ENCODE measurements at regions of chr19 and their contacts with region 1.

Region 1: DNA sequence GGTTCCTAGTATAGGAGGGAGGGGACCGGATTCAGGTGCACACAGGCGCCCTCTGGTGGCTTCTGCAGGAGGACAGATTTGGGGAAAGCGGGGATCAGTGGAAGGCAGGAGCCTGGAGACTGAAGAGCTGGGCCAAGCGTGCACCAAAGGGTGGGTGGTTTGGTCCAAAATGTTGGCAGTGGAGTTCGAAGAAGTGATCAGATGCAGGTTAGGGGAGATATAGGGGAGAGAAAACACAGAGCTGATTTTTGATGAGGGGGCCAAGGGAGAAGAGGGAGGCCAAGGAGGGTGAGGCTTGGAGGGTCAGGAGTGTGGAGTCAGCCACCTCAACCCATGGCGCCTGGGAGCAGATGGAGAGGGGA is 6.8 kb upstream of the CARM1 start:
- DNase-seq: peak; percentile 57 to 87 (median 82)
- ATAC-seq: peak; percentile 95
- H3K4me3 ChIP-seq: no peak overlapping the region
- H3K4me3 Mint-ChIP-seq: no peak overlapping the region
- H3K27ac ChIP-seq: no peak overlapping the region
- H3K27ac Mint-ChIP-seq: no peak overlapping the region
- H3K4me1 ChIP-seq: peaks cover 10% of the 10 kb centered on the region
- H3K4me1 Mint-ChIP-seq: peaks cover 6% of the 10 kb centered on the region
- H3K27me3 ChIP-seq: no peaks in the 10 kb centered on the region
- H3K27me3 Mint-ChIP-seq: no peaks in the 10 kb centered on the region
- CTCF ChIP-seq: peak; percentile 74

Region 2: DNA sequence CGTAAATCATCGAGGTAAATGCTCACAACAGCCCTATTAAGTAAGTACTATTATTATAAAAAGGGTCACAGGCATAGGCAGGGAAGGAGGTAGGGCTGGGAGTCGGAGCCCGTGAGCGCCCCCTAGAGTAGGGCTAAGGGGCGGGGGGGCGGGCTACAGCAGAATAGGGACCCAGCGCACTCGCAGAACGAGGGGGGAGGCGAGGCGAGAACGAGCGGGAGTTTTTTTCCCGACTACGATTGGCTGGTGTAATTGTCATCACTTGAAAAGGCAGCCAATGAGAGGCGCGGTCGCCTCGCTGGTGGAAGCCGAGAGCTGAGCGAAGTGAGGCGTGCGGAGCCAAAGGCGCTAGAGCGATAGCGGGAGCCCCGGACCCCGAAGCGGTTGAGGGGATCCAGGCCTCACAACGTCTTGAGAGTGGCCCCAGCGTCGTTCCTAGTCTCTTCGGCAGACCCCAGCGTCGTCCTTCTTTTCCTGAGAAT is 385.6 kb before region 1 on chr19:
- CTCF ChIA-PET with region 1: no interaction called
- POLR2A ChIA-PET with region 1: no interaction called
- intact Hi-C with region 1: loop called in 1 of 2 experiments (anchors 5 kb)
- DNase-seq: peak; percentile 75 to 96 (median 88)
- ATAC-seq: peak; percentile 97
- H3K4me3 ChIP-seq: peak overlapping the region; percentile 27 to 28
- H3K4me3 Mint-ChIP-seq: peak overlapping the region; percentile 70
- H3K27ac ChIP-seq: no peak overlapping the region
- H3K27ac Mint-ChIP-seq: no peak overlapping the region
- H3K4me1 ChIP-seq: peaks cover 10% of the 10 kb centered on the region
- H3K4me1 Mint-ChIP-seq: peaks cover 14% of the 10 kb centered on the region
- H3K27me3 ChIP-seq: no peaks in the 10 kb centered on the region
- H3K27me3 Mint-ChIP-seq: no peaks in the 10 kb centered on the region
- CTCF ChIP-seq: peak; percentile 74

Region 3: GRCh38 chr19:10701955-10702525 is 162.5 kb before region 1 on chr19:
- CTCF ChIA-PET with region 1: interaction called, 21 read pairs
- POLR2A ChIA-PET with region 1: interaction called, 8 read pairs
- intact Hi-C with region 1: no loop called
- DNase-seq: peak in 3 of 9 experiments; percentile 16 to 54 (median 52)
- ATAC-seq: peak; percentile 20
- H3K4me3 ChIP-seq: peak overlapping the region; percentile 80 to 81
- H3K4me3 Mint-ChIP-seq: peak overlapping the region; percentile 88
- H3K27ac ChIP-seq: peak overlapping the region in 1 of 2 experiments; percentile 48
- H3K27ac Mint-ChIP-seq: no peak overlapping the region
- H3K4me1 ChIP-seq: peaks cover 11% of the 10 kb centered on the region
- H3K4me1 Mint-ChIP-seq: peaks cover 11% of the 10 kb centered on the region
- H3K27me3 ChIP-seq: no peaks in the 10 kb centered on the region
- H3K27me3 Mint-ChIP-seq: peaks cover 5% of the 10 kb centered on the region
- CTCF ChIP-seq: no peak

Region 4: DNA sequence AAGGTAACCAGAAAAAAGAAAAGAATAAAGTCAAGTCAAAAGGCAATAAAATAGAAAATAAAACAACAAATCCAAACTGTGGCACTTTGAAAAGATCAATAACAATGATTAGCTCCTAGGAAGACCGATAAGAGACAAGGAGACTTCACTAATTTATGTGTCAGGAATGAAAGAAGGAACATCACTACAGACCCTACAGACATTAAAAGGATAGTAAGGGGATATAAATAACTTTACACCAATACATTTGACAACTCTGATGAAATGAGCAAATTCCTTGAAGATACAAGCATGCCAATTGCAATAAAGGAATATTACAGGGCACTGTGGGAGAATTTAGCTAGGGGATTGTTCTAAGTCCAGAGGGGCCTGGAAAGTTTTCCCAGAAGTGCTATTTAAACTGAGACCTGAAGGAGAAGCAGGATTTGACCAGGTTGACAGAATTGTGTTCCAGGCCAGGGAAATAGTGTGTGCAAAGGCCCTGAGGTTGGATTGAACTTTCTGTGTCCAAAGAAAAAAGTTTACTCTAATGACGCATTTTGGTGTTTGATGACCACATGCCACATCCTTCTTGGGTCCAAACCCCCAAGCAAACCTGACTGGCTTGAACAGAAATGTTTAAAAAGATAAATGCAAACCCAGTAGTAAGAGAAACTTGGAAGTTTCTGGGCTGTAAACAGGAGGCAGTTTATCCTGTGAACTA is 17.9 kb before region 1 on chr19:
- CTCF ChIA-PET with region 1: interaction called, 12 read pairs
- POLR2A ChIA-PET with region 1: no interaction called
- intact Hi-C with region 1: no loop called
- DNase-seq: no peak
- ATAC-seq: no peak
- H3K4me3 ChIP-seq: no peak overlapping the region
- H3K4me3 Mint-ChIP-seq: no peak overlapping the region
- H3K27ac ChIP-seq: no peak overlapping the region
- H3K27ac Mint-ChIP-seq: no peak overlapping the region
- H3K4me1 ChIP-seq: peaks cover 4% of the 10 kb centered on the region
- H3K4me1 Mint-ChIP-seq: peaks cover 3% of the 10 kb centered on the region
- H3K27me3 ChIP-seq: no peaks in the 10 kb centered on the region
- H3K27me3 Mint-ChIP-seq: no peaks in the 10 kb centered on the region
- CTCF ChIP-seq: no peak

Region 5: DNA sequence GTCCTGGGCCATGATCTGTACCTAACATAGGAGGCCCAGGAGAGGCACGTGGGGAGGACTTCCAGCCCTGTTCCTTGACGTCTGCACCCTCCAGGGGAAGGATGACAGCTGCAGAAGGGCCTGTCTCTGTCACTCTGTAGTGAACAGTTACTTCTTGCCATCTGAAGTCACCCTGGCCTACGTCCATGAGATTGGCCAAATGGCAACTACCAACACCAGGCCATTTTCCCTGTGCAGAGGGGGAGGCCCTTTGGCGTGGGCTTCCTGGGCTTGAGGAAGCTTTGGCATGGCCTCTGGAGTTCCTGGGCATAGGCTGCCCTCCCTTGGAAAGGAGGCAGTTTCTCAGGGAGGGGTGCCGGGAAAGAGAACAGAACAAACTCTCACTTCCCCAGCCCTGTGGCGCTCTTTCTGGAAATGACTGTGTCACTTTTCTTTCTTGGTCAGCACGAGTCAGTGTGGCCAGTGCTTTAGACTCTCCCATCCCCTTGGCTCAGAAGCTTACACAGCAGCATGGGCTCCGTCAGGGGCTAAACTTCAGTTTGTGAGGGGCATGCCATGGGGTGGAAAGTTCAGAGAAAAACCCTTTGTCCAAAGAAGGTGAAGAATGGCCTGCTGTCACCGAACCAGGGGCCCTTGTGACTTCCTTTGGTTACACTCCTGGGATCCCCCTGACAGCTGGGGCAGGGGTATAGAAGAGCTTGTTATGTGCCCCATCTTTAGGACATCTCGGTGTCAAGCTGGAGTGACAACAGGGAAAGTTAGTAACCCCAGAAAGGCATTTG is 12.1 kb after region 1 on chr19:
- CTCF ChIA-PET with region 1: interaction called, 16 read pairs
- POLR2A ChIA-PET with region 1: interaction called, 4 read pairs
- intact Hi-C with region 1: no loop called
- DNase-seq: no peak
- ATAC-seq: no peak
- H3K4me3 ChIP-seq: no peak overlapping the region
- H3K4me3 Mint-ChIP-seq: no peak overlapping the region
- H3K27ac ChIP-seq: no peak overlapping the region
- H3K27ac Mint-ChIP-seq: no peak overlapping the region
- H3K4me1 ChIP-seq: peaks cover 17% of the 10 kb centered on the region
- H3K4me1 Mint-ChIP-seq: peaks cover 39% of the 10 kb centered on the region
- H3K27me3 ChIP-seq: no peaks in the 10 kb centered on the region
- H3K27me3 Mint-ChIP-seq: no peaks in the 10 kb centered on the region
- CTCF ChIP-seq: no peak

Region 6: DNA sequence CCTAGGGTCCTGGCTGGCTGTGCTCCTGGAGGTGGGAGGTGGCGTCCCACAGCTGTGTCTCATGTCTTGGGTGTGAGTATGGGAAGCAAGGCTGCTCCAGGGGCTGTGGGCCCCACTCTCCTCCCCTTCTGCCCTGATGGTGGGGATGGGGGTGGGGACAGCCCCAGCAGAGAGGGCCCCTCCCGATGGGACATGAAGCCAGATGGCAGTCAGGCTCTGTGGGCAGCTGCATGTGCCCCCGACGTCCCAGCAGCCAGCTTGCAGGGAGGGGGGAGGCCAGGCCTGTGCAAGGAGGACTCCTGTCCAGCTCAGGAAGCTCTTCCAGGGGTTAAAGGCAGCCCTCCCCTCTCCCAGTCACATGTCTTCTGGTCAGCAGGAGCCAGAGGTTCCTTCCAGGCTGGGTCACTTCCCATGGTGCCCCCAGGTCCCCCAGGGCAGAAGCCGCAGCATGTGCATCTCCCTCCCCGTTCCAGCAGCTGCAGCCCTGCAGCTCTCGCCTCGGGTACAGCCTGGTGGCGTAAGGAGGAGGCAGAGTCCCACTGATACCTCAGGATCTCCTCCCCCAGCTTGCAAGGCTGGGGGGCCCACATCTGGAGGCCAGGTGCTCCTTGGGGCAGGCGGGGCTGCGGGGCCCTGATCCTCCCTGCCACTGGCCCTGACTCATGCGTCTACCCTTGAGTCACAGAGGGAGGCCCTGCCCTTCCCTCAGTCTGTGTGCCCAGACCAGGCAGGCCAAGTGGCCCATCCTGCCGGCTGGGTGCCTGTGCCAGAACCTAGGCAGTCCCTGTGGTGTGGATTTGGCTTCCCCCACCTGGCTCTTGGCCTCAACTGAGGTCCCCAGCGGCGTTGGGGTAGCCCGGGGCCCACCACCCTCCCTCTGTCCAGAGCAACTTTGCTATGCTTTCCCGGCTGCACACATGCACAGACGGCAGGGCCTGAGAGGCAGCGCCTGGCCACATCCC is 50.9 kb after region 1 on chr19:
- CTCF ChIA-PET with region 1: no interaction called
- POLR2A ChIA-PET with region 1: no interaction called
- intact Hi-C with region 1: no loop called
- DNase-seq: no peak
- ATAC-seq: no peak
- H3K4me3 ChIP-seq: no peak overlapping the region
- H3K4me3 Mint-ChIP-seq: no peak overlapping the region
- H3K27ac ChIP-seq: no peak overlapping the region
- H3K27ac Mint-ChIP-seq: no peak overlapping the region
- H3K4me1 ChIP-seq: no peaks in the 10 kb centered on the region
- H3K4me1 Mint-ChIP-seq: no peaks in the 10 kb centered on the region
- H3K27me3 ChIP-seq: no peaks in the 10 kb centered on the region
- H3K27me3 Mint-ChIP-seq: no peaks in the 10 kb centered on the region
- CTCF ChIP-seq: no peak

Measured in CD8-positive, alpha-beta T cell (primary cell).